ENCODE measurements at regions of chr2 and their contacts with region 1.

Region 1: DNA sequence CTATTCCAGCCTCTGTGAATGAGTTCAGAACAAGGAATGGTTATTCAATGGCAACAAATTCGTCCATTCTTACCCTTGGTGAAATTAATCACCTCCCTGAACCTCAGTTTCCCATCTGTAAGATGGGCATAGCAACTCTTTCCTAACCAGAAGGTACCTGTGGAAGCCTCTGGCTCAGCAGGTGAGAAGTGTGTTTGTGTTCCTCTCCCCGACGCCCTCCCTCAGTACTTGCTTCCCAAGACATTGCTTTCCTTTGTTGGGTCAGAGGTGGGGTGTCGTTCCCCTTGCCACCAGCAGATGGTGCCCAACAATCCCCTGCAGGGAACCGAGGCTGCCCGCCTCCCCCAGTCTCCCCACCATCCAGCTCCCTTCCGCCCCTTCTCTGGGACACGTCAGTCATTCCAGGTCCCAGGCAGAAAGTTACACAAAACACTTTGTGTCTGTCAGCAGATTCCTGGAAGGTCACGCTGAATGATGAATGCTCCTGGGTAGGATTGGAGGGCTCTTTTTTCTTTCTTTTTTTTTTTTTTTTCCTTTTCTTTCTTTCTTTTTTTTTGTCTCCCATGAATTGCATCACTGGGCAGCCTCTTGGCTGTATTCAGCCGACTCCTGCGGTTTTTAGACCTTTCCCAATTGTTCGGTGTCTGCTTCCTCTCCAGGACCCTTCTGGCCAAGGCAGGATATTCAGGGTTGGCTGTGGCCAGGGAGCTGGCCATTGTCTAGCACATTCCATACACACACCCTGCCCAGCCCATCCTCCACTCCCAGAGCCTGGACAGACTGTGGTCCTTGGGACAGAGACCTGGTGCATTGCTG is 117.3 kb downstream of the LPIN1 start:
- DNase-seq: peak; percentile 99

Region 2: DNA sequence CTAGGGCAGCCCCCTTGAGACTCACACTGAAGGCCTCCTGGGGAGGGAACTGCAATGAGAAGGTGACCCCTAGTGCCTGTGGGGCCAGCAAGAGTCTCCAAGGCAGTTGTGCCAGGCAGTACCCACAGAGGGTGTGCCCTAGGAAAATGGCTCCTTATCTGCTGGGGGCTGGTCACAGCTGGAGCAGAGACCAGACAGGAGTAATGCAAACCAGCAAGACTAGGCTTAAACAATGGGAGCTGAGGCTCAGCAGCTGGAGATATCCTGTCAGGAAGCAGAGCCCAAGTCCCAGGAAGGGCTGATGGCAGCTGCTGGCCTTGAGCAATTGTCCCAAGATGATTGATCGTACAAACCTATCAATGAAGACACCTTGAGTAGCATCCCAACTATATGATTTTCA is 371.0 kb before region 1 on chr2:
- in situ Hi-C with region 1: no loop called
- DNase-seq: no peak

Region 3: GRCh38 chr2:11642974-11643373 is 220.7 kb before region 1 on chr2:
- in situ Hi-C with region 1: no loop called
- DNase-seq: no peak

Region 4: DNA sequence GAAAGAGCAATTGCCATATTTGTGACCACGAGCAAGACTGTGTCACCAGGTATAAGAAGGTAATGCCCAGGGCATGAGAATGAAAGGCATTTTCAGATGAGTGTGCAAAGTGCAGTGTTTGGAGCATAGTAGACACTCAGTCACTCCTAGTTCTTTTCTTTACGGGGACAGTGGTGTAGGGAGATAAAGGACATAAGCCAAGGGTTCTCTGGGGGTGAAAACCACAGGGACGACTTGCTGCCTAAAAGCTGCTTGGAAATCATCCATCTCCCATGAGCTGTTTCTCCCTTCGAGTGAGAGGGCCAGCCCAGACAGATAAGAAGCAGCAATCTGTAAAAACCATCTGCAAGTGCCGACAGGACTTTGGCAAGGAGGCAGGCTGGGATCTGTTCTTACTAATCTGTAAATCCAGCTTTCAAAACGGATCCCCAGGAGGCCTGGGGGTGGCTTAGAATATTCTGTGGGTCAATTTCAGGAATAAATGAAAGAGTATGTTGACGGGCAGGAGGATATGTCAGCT is 104.3 kb after region 1 on chr2:
- in situ Hi-C with region 1: loop called (anchors 25 kb)
- DNase-seq: no peak

Region 5: GRCh38 chr2:11998218-11998617 is 134.5 kb after region 1 on chr2:
- in situ Hi-C with region 1: no loop called
- DNase-seq: no peak

Region 6: DNA sequence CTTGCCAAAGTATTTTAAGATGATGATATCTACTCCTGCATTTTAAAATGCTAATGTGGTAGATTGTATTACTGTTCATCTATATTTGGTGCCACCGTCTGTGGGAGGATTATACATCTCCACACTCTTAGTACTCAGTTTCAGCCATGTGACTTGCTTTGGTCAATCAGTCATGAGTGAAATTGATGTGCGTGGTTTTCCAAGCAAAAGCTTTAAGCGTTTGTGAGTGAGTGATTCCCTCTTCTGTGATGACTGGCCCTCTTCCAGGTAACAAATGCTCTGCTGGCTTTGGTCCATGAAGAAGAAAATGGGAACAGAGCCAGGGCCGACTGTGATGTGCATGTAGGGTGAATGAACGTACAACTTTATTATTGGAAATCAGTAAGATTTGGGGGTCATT is 213.1 kb after region 1 on chr2:
- in situ Hi-C with region 1: no loop called
- DNase-seq: no peak

Region 7: DNA sequence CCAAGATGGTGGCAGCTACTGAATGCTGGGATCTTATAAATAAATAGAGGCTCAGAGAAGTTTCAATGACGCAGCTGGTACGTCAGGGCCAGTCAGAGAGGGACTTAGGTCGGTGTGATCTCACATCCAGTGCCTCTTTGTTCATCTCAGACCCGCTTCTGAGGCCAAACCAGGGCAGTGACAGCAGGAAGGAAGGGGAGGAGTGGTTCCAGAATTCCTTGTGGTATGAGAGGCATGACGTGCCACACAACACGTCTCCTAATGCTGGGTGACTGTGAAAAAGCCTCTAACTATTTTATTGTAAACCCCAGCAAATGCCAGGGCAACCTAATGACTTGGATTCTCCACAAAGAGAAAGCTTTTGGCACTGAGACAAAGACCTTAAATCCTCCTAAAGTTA is 306.0 kb after region 1 on chr2:
- in situ Hi-C with region 1: loop called (anchors 25 kb)
- DNase-seq: peak; percentile 100

Measured in SK-MEL-5 (cell line).